ENCODE measurements at regions of chr2 and their contacts with region 1.

Region 1: GRCh38 chr2:102251042-102251848 is 60.1 kb upstream of the IL1RL1 start:
- DNase-seq: peak; percentile 76 to 88
- ATAC-seq: peak; percentile 86
- H3K4me3 ChIP-seq: peak overlapping the region in 1 of 2 donors; percentile 6
- H3K27ac ChIP-seq: no peak overlapping the region
- H3K4me1 ChIP-seq: no peaks in the 10 kb centered on the region
- H3K27me3 ChIP-seq: no peaks in the 10 kb centered on the region

Region 2: GRCh38 chr2:102057502-102058292 is 193.5 kb before region 1 on chr2:
- intact Hi-C with region 1: no loop called
- DNase-seq: no peak
- ATAC-seq: no peak
- H3K4me3 ChIP-seq: no peak overlapping the region
- H3K27ac ChIP-seq: no peak overlapping the region
- H3K4me1 ChIP-seq: peaks cover 0 to 3% of the 10 kb centered on the region in 2 donors
- H3K27me3 ChIP-seq: no peaks in the 10 kb centered on the region

Region 3: DNA sequence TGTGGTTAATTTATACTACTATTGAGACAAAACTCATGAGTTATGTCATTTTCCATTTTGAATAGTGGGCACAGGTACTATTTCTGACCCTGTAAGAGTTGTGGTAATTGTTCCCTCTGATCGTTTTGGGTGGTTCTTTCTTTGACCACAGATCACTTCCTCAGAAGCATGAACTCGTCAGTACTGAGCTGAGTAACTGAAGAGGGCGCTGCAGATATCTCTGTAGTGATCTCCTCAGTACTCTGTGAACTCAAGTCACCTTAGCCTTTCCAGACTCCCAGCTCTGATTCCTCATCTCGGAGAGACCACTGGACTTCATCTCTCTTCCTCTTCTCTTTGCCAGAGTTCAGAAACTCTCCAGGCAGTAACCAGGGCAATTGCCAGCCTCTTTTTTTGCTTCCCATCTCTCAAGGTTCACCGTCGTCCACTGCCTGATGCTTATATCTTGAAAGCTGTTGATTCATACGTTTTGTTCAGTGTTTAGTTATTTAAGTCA is 50.7 kb after region 1 on chr2:
- intact Hi-C with region 1: no loop called
- DNase-seq: no peak
- ATAC-seq: peak; percentile 41
- H3K4me3 ChIP-seq: no peak overlapping the region
- H3K27ac ChIP-seq: no peak overlapping the region
- H3K4me1 ChIP-seq: no peaks in the 10 kb centered on the region
- H3K27me3 ChIP-seq: no peaks in the 10 kb centered on the region

Region 4: GRCh38 chr2:102336502-102336945 is 85.3 kb after region 1 on chr2:
- intact Hi-C with region 1: loop called in 1 of 2 experiments (anchors 5 kb)
- DNase-seq: no peak
- ATAC-seq: peak; percentile 33
- H3K4me3 ChIP-seq: no peak overlapping the region
- H3K27ac ChIP-seq: peak overlapping the region; percentile 49 to 64
- H3K4me1 ChIP-seq: no peaks in the 10 kb centered on the region
- H3K27me3 ChIP-seq: no peaks in the 10 kb centered on the region

Region 5: DNA sequence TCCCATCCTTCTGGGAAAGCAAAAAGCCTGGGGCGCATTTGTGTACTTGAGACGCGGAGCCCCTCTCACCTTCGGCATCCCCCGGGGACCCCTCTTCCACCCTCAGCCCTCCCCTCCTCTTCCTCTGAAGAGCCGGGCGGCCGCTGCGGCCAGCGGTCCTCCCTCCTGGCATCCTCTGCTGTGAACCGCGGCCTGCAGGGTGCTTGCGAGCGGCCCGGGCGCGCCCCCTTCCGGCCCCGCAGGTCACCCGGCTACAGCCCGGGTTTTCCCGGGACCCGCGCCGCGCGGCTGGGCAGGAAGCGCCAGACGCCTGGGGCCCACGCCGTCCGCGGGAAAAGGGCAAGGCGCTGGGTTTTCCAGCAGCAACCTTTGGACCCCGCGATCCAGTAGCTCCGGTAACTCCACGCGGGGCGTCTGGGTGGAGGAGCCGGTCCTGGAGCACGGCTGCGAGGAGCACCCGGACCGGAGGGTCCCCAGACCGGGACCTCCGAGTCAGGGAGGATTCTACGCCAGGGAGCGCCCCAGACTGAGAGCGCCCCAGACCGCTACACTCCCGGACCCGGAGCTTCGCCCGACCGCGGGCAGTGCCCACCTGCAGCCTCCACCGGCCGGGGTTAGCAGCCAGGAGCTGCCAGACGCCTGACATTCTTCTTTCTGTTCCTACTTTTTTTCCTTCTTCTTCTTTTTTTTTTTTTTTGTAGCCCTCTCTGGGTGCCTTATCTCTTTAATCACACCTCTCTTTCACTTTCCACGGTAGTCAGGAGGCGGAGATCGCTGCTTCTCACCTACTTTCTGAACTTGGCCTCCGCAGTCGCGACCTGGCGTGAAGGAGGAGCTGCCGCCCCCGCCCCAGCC is 104.5 kb after region 1 on chr2 and contains the start of gene IL18R1:
- intact Hi-C with region 1: loop called (anchors 5 to 10 kb)
- DNase-seq: peak; percentile 86 to 93
- ATAC-seq: peak; percentile 97
- H3K4me3 ChIP-seq: peak within 1 kb of the TSS; percentile 39 to 74
- H3K27ac ChIP-seq: no peak within 1 kb of the TSS
- H3K4me1 ChIP-seq: no peaks in the 10 kb centered on the region
- H3K27me3 ChIP-seq: no peaks in the 10 kb centered on the region
- total RNA-seq, gene IL18R1: 8.0 to 11.0 TPM

Region 6: GRCh38 chr2:102442967-102443828 is 192.0 kb after region 1 on chr2:
- intact Hi-C with region 1: loop called in 1 of 2 experiments (anchors 10 kb)
- DNase-seq: no peak
- ATAC-seq: no peak
- H3K4me3 ChIP-seq: no peak overlapping the region
- H3K27ac ChIP-seq: no peak overlapping the region
- H3K4me1 ChIP-seq: no peaks in the 10 kb centered on the region
- H3K27me3 ChIP-seq: no peaks in the 10 kb centered on the region